Activated B cell treated with CpG ODN at 0.5 μM for 24 hours (primary cell): ENCODE measurements at regions of chr9 and their contacts with region 1.

Region 1: DNA sequence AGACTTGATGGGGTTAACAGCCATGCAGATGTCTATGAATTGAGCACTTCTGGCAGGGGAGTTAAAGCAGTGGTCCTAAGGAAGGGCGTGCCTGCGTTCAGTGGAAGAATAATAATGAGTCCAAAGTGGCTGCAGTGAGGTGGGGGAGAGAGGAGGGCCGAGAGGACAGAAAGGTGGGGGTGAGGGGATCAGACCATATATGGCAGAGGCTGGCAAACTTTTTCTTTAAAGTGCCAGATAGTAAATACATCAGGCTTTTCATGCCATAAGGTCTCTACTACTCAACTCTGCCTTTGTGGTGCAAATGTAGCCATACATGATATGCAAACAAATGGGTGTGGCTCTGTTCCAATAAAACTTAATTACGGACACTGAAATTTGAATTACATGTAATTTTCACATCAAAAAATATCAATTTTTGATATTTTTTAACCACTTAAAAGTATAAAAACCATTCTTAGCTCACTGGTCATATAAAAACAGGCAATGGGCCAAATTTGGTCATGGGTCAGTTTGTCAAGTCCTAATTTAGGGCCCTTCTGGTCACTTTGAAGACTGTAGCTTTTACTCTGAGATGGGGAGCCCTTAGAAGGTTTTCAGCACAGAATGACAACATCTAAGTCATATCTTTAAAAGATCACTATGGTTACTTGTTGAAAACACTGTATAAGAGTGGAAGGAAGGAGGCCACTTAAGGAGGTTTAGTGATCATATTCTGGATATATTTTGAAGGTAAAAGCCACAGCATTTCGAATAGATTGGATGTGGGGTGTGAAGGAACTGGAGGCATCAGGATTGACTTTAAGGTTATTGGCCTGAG is 76.9 kb downstream of the STRBP start:
- DNase-seq: no peak
- ATAC-seq: peak; percentile 18
- H3K4me3 Mint-ChIP-seq: no peak overlapping the region
- H3K27ac Mint-ChIP-seq: no peak overlapping the region
- H3K4me1 Mint-ChIP-seq: peaks cover 14% of the 10 kb centered on the region
- H3K27me3 Mint-ChIP-seq: no peaks in the 10 kb centered on the region
- CTCF ChIP-seq: no peak

Region 2: DNA sequence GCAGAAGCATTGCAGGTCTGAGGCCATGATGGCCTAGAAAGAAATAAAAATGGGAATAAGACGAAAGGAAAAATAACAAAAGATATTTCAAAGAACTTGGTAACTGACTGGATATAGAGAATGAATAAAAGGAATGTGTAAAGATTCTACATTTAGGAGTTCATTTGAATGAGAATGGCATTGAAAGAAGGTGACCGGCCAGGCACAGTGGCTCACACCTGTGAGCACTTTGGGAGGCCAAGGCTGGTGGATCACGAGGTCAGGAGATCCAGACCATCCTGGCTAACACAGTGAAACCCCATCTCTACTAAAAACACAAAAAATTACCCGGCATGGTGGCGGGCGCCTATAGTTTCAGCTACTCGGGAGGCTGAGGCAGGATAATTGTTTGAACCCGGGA is 268.8 kb before region 1 on chr9:
- CTCF ChIA-PET with region 1: no interaction called
- POLR2A ChIA-PET with region 1: no interaction called
- intact Hi-C with region 1: no loop called
- DNase-seq: no peak
- ATAC-seq: no peak
- H3K4me3 Mint-ChIP-seq: no peak overlapping the region
- H3K27ac Mint-ChIP-seq: no peak overlapping the region
- H3K4me1 Mint-ChIP-seq: peaks cover 19% of the 10 kb centered on the region
- H3K27me3 Mint-ChIP-seq: no peaks in the 10 kb centered on the region
- CTCF ChIP-seq: no peak

Region 3: DNA sequence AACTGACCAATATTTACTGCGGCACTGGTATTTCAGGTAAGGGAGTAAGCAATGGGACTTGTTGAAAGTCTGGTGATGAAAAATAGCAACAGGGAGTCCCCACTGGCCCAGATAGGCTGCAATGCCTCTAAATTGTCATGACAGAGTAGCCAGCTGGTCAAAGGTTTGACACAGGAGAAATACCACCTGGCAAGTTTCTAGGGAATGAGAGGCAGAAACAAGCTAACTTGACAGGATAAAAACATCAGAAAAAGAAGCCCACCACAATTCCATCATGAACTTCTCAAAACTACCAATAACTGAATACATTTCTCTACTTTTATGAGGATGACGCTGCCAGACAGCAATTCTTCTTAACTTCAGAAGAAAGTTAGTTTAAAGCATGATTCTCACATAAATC is 22.9 kb before region 1 on chr9:
- CTCF ChIA-PET with region 1: no interaction called
- POLR2A ChIA-PET with region 1: interaction called, 3 read pairs
- intact Hi-C with region 1: loop called (anchors 2 kb)
- DNase-seq: no peak
- ATAC-seq: no peak
- H3K4me3 Mint-ChIP-seq: no peak overlapping the region
- H3K27ac Mint-ChIP-seq: peak overlapping the region; percentile 71
- H3K4me1 Mint-ChIP-seq: peaks cover 84% of the 10 kb centered on the region
- H3K27me3 Mint-ChIP-seq: no peaks in the 10 kb centered on the region
- CTCF ChIP-seq: no peak

Region 4: GRCh38 chr9:123174887-123175518 is 16.5 kb before region 1 on chr9:
- CTCF ChIA-PET with region 1: interaction called, 4 read pairs
- POLR2A ChIA-PET with region 1: no interaction called
- intact Hi-C with region 1: loop called (anchors 1 kb)
- DNase-seq: no peak
- ATAC-seq: peak; percentile 91
- H3K4me3 Mint-ChIP-seq: peak overlapping the region; percentile 63
- H3K27ac Mint-ChIP-seq: peak overlapping the region; percentile 97
- H3K4me1 Mint-ChIP-seq: peaks cover 82% of the 10 kb centered on the region
- H3K27me3 Mint-ChIP-seq: no peaks in the 10 kb centered on the region
- CTCF ChIP-seq: no peak

Region 5: DNA sequence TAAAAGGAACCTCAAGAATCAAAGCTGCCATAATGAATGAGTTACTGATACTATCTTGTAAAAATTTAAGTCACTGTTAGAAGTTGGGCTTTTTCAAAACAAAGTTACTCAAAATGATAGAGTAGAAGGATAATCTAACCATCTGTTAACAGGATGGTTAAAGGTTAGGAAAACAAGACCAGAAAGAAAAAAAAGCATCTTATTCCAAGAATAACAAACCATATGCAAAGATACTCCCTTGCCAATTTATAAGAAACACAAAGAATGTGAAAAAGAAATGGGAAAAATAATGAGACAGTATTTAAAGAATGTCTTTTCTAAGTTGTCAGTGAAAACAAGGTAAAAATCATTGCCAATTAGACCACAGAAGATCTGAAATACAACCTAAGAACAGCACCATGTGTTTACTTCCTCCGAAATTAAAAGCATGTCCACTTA is 25.7 kb after region 1 on chr9:
- CTCF ChIA-PET with region 1: no interaction called
- POLR2A ChIA-PET with region 1: interaction called, 3 read pairs
- intact Hi-C with region 1: loop called (anchors 2 kb)
- DNase-seq: no peak
- ATAC-seq: no peak
- H3K4me3 Mint-ChIP-seq: peak overlapping the region; percentile 21
- H3K27ac Mint-ChIP-seq: peak overlapping the region; percentile 64
- H3K4me1 Mint-ChIP-seq: peaks cover 71% of the 10 kb centered on the region
- H3K27me3 Mint-ChIP-seq: no peaks in the 10 kb centered on the region
- CTCF ChIP-seq: no peak

Region 6: DNA sequence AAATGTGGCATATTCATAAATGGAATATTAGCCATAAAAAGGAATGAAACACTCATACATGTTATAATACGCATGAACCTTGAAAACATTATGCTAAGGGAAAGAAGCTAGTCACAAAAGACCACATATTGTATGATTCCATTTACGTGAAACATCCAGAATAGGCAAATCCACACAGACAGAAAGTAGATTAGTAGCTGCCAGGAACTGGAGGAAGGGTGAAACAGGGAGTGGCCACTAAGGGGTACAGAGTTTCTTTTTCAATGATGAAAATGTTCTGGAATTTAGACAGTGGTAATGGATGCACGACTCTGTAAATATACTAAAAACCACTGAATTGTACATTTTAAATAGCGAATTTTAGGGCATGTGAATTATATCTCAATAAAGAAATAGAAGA is 37.5 kb after region 1 on chr9:
- CTCF ChIA-PET with region 1: no interaction called
- POLR2A ChIA-PET with region 1: no interaction called
- intact Hi-C with region 1: no loop called
- DNase-seq: no peak
- ATAC-seq: no peak
- H3K4me3 Mint-ChIP-seq: no peak overlapping the region
- H3K27ac Mint-ChIP-seq: no peak overlapping the region
- H3K4me1 Mint-ChIP-seq: peaks cover 31% of the 10 kb centered on the region
- H3K27me3 Mint-ChIP-seq: no peaks in the 10 kb centered on the region
- CTCF ChIP-seq: no peak

Region 7: GRCh38 chr9:123724211-123724796 is 532.8 kb after region 1 on chr9:
- CTCF ChIA-PET with region 1: no interaction called
- POLR2A ChIA-PET with region 1: no interaction called
- intact Hi-C with region 1: no loop called
- DNase-seq: no peak
- ATAC-seq: no peak
- H3K4me3 Mint-ChIP-seq: no peak overlapping the region
- H3K27ac Mint-ChIP-seq: no peak overlapping the region
- H3K4me1 Mint-ChIP-seq: no peaks in the 10 kb centered on the region
- H3K27me3 Mint-ChIP-seq: no peaks in the 10 kb centered on the region
- CTCF ChIP-seq: no peak

Region 8: GRCh38 chr9:123960366-123960765 is 768.9 kb after region 1 on chr9:
- CTCF ChIA-PET with region 1: no interaction called
- POLR2A ChIA-PET with region 1: no interaction called
- intact Hi-C with region 1: no loop called
- DNase-seq: no peak
- ATAC-seq: no peak
- H3K4me3 Mint-ChIP-seq: no peak overlapping the region
- H3K27ac Mint-ChIP-seq: no peak overlapping the region
- H3K4me1 Mint-ChIP-seq: peaks cover 11% of the 10 kb centered on the region
- H3K27me3 Mint-ChIP-seq: peaks cover 31% of the 10 kb centered on the region
- CTCF ChIP-seq: no peak